Endothelial cell of umbilical vein (primary cell): ENCODE measurements at regions of chr2 and their contacts with region 1.

Region 1: GRCh38 chr2:123746006-123746405 is 279.1 kb upstream of the CNTNAP5 start:
- DNase-seq: no peak
- H3K4me3 ChIP-seq: no peak overlapping the region
- H3K27ac ChIP-seq: no peak overlapping the region
- H3K4me1 ChIP-seq: no peaks in the 10 kb centered on the region
- H3K27me3 ChIP-seq: no peaks in the 10 kb centered on the region
- CTCF ChIP-seq: no peak
- POLR2A ChIP-seq: no peak

Region 2: GRCh38 chr2:124933883-124934282 is 1187.9 kb after region 1 on chr2:
- CTCF ChIA-PET with region 1: no interaction called
- POLR2A ChIA-PET with region 1: no interaction called
- dilution Hi-C with region 1: no loop called
- intact Hi-C with region 1: loop called (anchors 10 kb)
- DNase-seq: no peak
- H3K4me3 ChIP-seq: no peak overlapping the region
- H3K27ac ChIP-seq: no peak overlapping the region
- H3K4me1 ChIP-seq: no peaks in the 10 kb centered on the region
- H3K27me3 ChIP-seq: no peaks in the 10 kb centered on the region
- CTCF ChIP-seq: no peak
- POLR2A ChIP-seq: no peak